ENCODE measurements at regions of chr18 and their contacts with region 1.

Region 1: DNA sequence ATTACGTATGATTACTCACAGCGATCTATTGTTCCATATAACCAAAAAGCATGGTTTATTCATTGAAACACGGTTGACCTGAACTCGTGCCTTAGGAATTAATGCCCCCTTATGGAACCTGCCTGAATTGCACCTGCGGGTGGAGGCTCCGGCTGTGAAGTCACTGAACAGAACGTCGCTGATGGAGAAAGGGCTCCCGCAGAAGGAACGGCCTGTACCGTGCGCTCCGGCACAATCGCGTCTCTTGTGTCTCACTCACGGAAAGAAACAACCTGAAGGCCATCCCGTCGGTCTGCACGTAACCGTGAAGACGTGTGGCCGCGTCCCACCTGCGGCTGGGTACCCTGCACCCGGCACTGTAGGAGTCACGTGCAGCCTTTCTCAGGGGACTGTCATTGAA is 133.1 kb downstream of the NFATC1 start:
- DNase-seq: peak; percentile 5
- H3K4me3 ChIP-seq: no peak overlapping the region
- H3K27me3 ChIP-seq: peaks cover 11% of the 10 kb centered on the region
- CTCF ChIP-seq: peak; percentile 90

Region 2: GRCh38 chr18:79540161-79540903 is 11.5 kb after region 1 on chr18:
- CTCF ChIA-PET with region 1: interaction called, 24 read pairs
- POLR2A ChIA-PET with region 1: no interaction called
- DNase-seq: no peak
- H3K4me3 ChIP-seq: no peak overlapping the region
- H3K27me3 ChIP-seq: peaks cover 3% of the 10 kb centered on the region
- CTCF ChIP-seq: no peak

Region 3: GRCh38 chr18:79644006-79644665 is 115.3 kb after region 1 on chr18:
- CTCF ChIA-PET with region 1: interaction called, 13 read pairs
- POLR2A ChIA-PET with region 1: no interaction called
- DNase-seq: no peak
- H3K4me3 ChIP-seq: no peak overlapping the region
- H3K27me3 ChIP-seq: peaks cover 4% of the 10 kb centered on the region
- CTCF ChIP-seq: peak; percentile 99